AG04450 (cell line): ENCODE measurements at regions of chr17 and their contacts with region 1.

Region 1: GRCh38 chr17:38824899-38825761 is at the start of gene CWC25:
- DNase-seq: peak; percentile 92
- H3K4me3 ChIP-seq: peak within 1 kb of the TSS; percentile 93
- H3K27ac ChIP-seq: peak within 1 kb of the TSS; percentile 99
- H3K27me3 ChIP-seq: no peaks in the 10 kb centered on the region
- CTCF ChIP-seq: no peak
- polyA plus RNA-seq, gene CWC25: 13.3 and 15.3 TPM in 2 replicates

Region 2: GRCh38 chr17:38841141-38841485 is 16.0 kb after region 1 on chr17:
- CTCF ChIA-PET with region 1: no interaction called
- POLR2A ChIA-PET with region 1: interaction called, 11 read pairs
- DNase-seq: no peak
- H3K4me3 ChIP-seq: no peak overlapping the region
- H3K27ac ChIP-seq: no peak overlapping the region
- H3K27me3 ChIP-seq: no peaks in the 10 kb centered on the region
- CTCF ChIP-seq: no peak

Region 3: DNA sequence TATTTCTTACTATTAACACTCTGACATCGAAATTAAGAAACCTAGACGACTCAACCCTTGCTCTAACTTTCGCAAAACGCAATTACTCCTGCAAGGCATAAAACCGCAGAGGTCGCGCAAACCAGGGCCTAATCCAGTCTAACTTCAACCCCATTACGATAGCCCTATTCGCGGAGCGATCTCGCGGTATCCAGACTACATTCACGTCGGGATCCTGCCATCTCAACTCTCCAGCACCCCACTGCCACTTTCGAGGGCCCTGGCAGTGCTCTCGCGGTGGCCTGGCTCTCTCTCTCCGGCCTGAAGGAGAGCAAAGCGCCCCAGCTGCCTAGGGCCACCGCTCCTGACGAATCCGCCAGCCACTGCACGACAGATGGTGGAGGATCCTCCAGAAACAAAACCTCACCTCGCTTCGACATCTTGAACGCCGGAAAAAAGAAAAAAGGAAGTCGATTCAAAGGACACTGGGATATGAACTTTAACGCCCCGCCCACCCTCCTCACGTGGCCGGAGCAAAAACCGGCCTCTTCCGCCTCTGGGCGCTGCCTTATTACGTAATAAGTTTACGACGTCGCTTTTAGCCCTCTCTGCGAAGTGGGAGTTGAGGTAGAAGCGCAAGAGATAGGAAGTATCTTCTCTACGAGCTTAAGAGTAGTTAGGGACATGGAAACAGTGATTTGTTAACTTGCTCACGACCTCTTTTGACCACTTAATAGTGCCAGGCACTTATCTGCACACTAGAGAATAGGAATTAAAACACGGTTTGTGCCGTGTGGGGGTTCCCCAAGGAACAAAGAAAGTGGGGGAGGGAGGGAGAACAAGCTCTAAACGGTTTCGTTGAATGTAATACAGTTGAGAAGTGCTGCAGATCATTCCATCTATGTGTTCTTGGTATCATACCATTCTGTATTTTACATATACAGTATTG is 28.4 kb after region 1 on chr17 and contains the start of gene RPL23:
- CTCF ChIA-PET with region 1: no interaction called
- POLR2A ChIA-PET with region 1: interaction called, 13 read pairs
- DNase-seq: peak; percentile 89
- H3K4me3 ChIP-seq: peak within 1 kb of the TSS; percentile 91
- H3K27ac ChIP-seq: peak within 1 kb of the TSS; percentile 90
- H3K27me3 ChIP-seq: no peaks in the 10 kb centered on the region
- CTCF ChIP-seq: no peak
- polyA plus RNA-seq, gene RPL23: 2,769 and 3,155 TPM in 2 replicates

Region 4: GRCh38 chr17:38922538-38923297 is 97.6 kb after region 1 on chr17:
- CTCF ChIA-PET with region 1: no interaction called
- POLR2A ChIA-PET with region 1: no interaction called
- DNase-seq: no peak
- H3K4me3 ChIP-seq: no peak overlapping the region
- H3K27ac ChIP-seq: peak overlapping the region; percentile 39
- H3K27me3 ChIP-seq: no peaks in the 10 kb centered on the region
- CTCF ChIP-seq: no peak